Vagina (tissue), 2 donors: ENCODE measurements at regions of chr14 and their contacts with region 1.

Region 1: DNA sequence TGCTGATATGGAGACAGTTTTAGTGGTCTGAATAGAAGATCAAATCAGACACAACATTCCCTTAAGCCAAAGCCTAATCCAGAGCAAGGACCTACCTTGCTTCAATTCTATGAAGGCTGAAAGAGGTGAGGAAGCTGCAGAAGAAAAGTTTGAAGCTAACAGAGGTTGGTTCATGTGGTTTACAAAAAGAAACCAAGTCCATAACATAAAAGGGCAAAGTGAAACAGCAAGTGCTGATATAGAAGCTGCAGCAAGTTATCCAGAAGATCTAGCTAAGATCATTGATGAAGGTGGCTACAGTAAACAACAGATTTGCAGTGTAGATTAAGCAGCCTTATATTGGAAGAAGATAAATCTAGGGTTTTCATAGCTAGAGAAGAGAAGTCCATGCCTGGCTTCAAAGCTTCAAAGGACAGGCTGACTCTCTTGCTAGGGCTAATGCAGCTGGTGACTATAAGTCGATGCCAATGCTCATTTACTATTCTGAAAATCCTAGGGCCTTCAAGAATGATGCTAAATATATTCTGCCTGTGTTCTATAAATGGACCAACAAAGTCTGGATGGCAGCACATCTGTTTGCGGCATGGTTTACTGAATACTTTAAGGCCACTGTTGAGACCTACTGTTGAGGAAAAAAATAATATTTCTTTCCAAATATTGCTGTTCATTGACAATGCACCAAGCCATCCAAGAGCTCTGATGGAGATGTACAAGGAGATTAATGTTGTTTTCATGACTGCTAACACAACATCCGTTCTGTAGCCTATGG is 361.0 kb downstream of the DPF3 start:
- DNase-seq: no peak
- H3K4me3 ChIP-seq: no peak overlapping the region
- H3K27ac ChIP-seq: no peak overlapping the region
- H3K4me1 ChIP-seq: no peaks in the 10 kb centered on the region
- H3K27me3 ChIP-seq: no peaks in the 10 kb centered on the region
- CTCF ChIP-seq: no peak
- POLR2A ChIP-seq: no peak

Region 2: DNA sequence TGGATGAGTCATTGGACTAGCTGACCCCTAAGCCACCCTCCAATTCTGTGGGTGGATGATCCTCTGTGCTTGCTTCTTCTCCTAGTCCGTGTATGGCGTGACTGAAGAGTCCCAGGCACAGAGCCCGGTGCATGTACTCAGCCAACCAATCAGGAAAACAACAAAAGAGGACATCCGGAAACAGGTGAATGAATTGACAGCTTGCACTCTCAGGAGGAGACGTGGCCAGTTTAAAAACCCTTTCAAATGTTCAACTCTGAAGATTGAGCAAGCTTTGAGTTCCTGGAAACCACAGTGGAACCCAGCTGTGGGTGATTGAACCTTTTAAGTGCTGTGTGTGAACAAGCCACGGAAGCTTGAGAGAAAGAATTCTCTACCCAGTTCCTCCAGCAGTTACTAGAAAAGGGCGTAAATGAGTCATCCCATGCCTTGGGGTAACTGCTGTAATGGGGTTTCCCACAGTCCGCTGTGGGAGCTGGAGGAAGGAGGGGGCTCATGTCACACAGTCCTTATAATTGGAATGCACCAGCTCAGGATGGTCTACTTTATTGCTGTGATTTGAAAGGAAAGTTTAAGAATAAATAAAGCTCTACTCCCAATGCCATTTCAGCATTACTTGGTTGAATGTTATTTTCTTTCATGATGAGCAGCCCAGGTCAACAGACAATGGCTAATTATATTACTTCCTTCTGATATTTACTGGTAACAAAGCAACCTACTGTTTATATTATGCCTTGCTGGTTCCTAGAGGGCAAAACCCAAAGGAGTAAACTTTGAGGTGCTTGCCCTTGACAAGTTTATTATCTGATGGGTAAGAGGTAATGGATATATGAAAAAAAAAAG is 56.0 kb before region 1 on chr14:
- intact Hi-C with region 1: loop called (anchors 2 kb)
- DNase-seq: peak in 1 of 2 donors; percentile 52
- H3K4me3 ChIP-seq: no peak overlapping the region
- H3K27ac ChIP-seq: no peak overlapping the region
- H3K4me1 ChIP-seq: peaks cover 4% of the 10 kb centered on the region
- H3K27me3 ChIP-seq: no peaks in the 10 kb centered on the region
- CTCF ChIP-seq: no peak
- POLR2A ChIP-seq: no peak